ENCODE measurements at regions of chr20 and their contacts with region 1.

Region 1: GRCh38 chr20:9978397-9979004 is 56.3 kb upstream of the ANKEF1 start:
- DNase-seq: peak in 2 of 4 donors; percentile 75 to 89
- ATAC-seq: peak; percentile 99
- H3K4me3 ChIP-seq: no peak overlapping the region
- H3K27ac ChIP-seq: no peak overlapping the region
- H3K4me1 ChIP-seq: peaks cover 0 to 8% of the 10 kb centered on the region in 2 donors
- H3K27me3 ChIP-seq: no peaks in the 10 kb centered on the region
- CTCF ChIP-seq: peak; percentile 52 to 58

Region 2: DNA sequence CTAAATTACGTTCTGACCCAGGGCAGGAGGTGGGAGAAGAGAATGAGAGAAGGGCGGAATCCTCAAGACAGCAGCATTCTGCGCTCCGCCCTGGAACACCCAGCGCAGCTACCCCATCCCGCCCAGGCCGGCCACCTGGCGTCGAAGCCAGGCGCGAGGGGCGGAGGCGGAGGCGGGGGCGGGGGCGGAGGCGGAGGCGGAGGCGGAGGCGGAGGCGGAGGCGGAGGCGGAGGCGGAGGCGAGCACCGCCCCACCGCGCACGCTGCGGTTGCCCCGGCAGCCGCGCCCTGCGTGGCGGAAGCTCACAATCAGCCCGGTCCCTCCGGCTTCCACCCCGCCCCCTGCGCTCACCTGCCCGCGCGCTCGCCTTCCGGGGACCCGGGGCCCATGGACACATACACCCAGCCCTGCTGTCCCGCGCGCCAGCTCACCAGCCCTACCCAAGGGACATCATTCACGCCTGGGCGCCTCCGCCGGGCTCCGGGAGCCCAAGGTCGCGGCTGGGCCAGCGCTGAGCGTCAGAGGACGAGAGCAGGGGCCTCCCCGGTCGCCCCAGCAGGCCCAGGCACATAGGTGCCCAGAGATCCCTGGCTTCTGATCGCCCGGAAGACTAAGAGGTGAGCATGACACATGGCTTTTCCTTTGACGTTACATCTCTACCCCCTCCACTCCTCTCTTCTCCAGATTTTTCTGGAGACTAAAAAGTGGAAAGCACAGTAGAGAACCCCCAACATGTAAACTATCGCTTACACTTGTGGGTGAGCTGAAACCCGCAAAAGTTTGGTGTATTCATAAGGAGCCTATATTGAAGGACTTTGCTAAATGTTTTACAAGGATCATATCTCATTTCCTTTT is 56.4 kb after region 1 on chr20 and contains the start of gene ANKEF1:
- intact Hi-C with region 1: no loop called
- DNase-seq: peak; percentile 57 to 94 (median 86)
- ATAC-seq: peak; percentile 100
- H3K4me3 ChIP-seq: peak within 1 kb of the TSS; percentile 55 to 67
- H3K27ac ChIP-seq: peak within 1 kb of the TSS; percentile 39 to 74
- H3K4me1 ChIP-seq: peaks cover 0 to 5% of the 10 kb centered on the region in 2 donors
- H3K27me3 ChIP-seq: no peaks in the 10 kb centered on the region
- CTCF ChIP-seq: no peak
- polyA plus RNA-seq, gene ANKEF1: 5.3 to 7.5 (median 6.3) TPM

Region 3: GRCh38 chr20:10089871-10090587 is 111.5 kb after region 1 on chr20:
- intact Hi-C with region 1: loop called in 1 of 2 experiments (anchors 5 kb)
- DNase-seq: no peak
- ATAC-seq: no peak
- H3K4me3 ChIP-seq: no peak overlapping the region
- H3K27ac ChIP-seq: no peak overlapping the region
- H3K4me1 ChIP-seq: no peaks in the 10 kb centered on the region
- H3K27me3 ChIP-seq: no peaks in the 10 kb centered on the region
- CTCF ChIP-seq: no peak

Region 4: GRCh38 chr20:10115021-10115420 is 136.5 kb after region 1 on chr20:
- intact Hi-C with region 1: no loop called
- DNase-seq: no peak
- ATAC-seq: peak; percentile 25
- H3K4me3 ChIP-seq: no peak overlapping the region
- H3K27ac ChIP-seq: no peak overlapping the region
- H3K4me1 ChIP-seq: no peaks in the 10 kb centered on the region
- H3K27me3 ChIP-seq: no peaks in the 10 kb centered on the region
- CTCF ChIP-seq: no peak

Region 5: GRCh38 chr20:10427060-10427692 is 448.7 kb after region 1 on chr20:
- intact Hi-C with region 1: loop called in 1 of 2 experiments (anchors 10 kb)
- DNase-seq: peak in 3 of 4 donors; percentile 46 to 75 (median 47)
- ATAC-seq: peak; percentile 67
- H3K4me3 ChIP-seq: no peak overlapping the region
- H3K27ac ChIP-seq: no peak overlapping the region
- H3K4me1 ChIP-seq: peaks cover 0 to 29% of the 10 kb centered on the region in 2 donors
- H3K27me3 ChIP-seq: no peaks in the 10 kb centered on the region
- CTCF ChIP-seq: peak; percentile 60 to 66

Measured in left lung (tissue), 14 donors.